ENCODE measurements at regions of chr7 and their contacts with region 1.

Region 1: DNA sequence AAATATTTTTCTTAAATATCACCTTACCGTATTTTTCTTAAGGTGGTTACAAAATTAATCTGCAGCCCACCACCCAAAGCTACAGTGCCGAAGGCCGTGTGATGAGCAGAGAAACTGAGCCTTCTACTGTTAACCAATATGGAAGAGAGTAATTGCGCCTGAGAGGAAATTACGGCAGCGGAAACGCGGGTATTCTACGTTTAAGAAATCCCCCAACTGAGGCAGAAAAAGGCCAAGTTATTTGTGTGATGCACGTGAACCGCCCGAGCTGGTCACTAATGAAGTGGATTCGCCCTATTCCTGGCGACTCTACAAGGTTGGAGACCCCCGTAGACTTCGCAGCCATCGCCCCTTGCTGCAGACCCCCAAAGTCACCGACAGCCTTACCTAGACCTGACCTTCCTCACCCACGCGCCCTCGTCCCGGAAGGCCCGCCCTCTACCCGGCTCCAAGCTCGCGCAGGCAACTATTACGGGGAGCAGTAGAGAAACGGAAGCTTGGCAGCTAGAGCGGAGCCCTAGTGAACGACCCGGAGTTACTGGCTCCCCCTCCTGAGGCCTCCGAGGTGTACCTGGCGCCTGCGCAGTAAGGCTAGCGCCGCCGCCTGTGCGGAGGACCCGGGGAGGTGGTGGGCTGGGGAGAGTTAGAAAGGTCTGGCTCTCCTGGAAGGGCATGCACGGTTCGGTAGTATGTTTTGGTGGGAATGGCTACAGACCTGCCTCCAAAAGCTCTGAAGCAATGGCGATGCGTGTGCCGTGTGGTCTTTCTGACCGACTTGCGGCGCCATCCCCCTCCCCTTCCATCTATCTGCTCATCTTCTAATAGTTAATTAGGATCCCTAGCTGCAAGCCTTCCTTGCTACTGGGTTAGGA is at the start of gene MRPS33:
- DNase-seq: peak; percentile 97
- H3K4me3 Mint-ChIP-seq: peak within 1 kb of the TSS; percentile 98
- H3K27ac Mint-ChIP-seq: peak within 1 kb of the TSS; percentile 100
- H3K4me1 Mint-ChIP-seq: peaks cover 33% of the 10 kb centered on the region
- H3K27me3 Mint-ChIP-seq: peaks cover 5% of the 10 kb centered on the region
- total RNA-seq, gene MRPS33: 95.4 to 95.8 TPM

Region 2: GRCh38 chr7:139753081-139753692 is 1261.6 kb before region 1 on chr7:
- CTCF ChIA-PET with region 1: no interaction called
- POLR2A ChIA-PET with region 1: no interaction called
- intact Hi-C with region 1: no loop called
- DNase-seq: no peak
- H3K4me3 Mint-ChIP-seq: no peak overlapping the region
- H3K27ac Mint-ChIP-seq: no peak overlapping the region
- H3K4me1 Mint-ChIP-seq: peaks cover 35% of the 10 kb centered on the region
- H3K27me3 Mint-ChIP-seq: no peaks in the 10 kb centered on the region

Region 3: DNA sequence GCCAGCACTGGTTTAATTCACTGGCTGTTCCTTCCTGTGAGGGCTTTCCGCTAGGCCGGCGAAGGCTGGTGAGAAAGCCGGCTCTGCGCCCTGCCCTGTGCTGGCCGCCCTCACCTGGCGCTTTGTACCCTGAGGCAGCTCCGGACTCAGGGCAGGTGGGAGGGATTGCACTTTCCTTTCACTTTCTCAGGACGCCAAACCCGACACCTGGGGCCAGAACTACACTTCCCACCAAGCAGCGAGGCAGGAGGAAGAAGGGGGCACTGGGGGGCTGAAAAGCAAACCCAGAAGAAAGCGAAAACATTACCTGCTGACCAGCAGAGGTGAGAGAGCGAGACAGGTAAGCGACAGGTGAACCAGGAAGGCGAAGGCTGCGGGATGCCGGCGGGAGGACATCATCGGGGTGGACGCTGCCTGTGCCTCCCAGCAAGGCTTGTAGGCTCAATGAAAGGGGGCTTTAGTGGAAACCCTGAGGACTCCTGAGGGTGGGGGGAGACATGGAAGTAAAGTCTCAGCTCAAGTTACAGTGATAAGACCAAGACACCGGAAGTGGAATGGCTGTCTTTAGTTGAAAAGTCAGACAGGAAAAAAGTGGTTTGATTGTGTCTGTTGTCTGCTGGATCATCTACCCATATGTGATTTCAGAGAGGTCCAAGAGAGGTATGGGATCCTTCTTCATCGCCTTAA is 610.7 kb before region 1 on chr7 and contains the start of gene RAB19:
- CTCF ChIA-PET with region 1: no interaction called
- POLR2A ChIA-PET with region 1: no interaction called
- intact Hi-C with region 1: loop called (anchors 10 kb)
- DNase-seq: peak; percentile 61
- H3K4me3 Mint-ChIP-seq: peak within 1 kb of the TSS; percentile 87
- H3K27ac Mint-ChIP-seq: peak within 1 kb of the TSS; percentile 92
- H3K4me1 Mint-ChIP-seq: peaks cover 33% of the 10 kb centered on the region
- H3K27me3 Mint-ChIP-seq: no peaks in the 10 kb centered on the region
- total RNA-seq, gene RAB19: 13.3 to 14.5 TPM

Region 4: GRCh38 chr7:140653319-140654108 is 361.2 kb before region 1 on chr7:
- CTCF ChIA-PET with region 1: no interaction called
- POLR2A ChIA-PET with region 1: no interaction called
- intact Hi-C with region 1: loop called (anchors 5 kb)
- DNase-seq: no peak
- H3K4me3 Mint-ChIP-seq: no peak overlapping the region
- H3K27ac Mint-ChIP-seq: no peak overlapping the region
- H3K4me1 Mint-ChIP-seq: peaks cover 17% of the 10 kb centered on the region
- H3K27me3 Mint-ChIP-seq: peaks cover 5% of the 10 kb centered on the region

Region 5: GRCh38 chr7:140726281-140726680 is 288.5 kb before region 1 on chr7:
- CTCF ChIA-PET with region 1: interaction called, 5 read pairs
- POLR2A ChIA-PET with region 1: no interaction called
- intact Hi-C with region 1: loop called (anchors 10 kb)
- DNase-seq: no peak
- H3K4me3 Mint-ChIP-seq: no peak overlapping the region
- H3K27ac Mint-ChIP-seq: no peak overlapping the region
- H3K4me1 Mint-ChIP-seq: peaks cover 15% of the 10 kb centered on the region
- H3K27me3 Mint-ChIP-seq: no peaks in the 10 kb centered on the region

Region 6: DNA sequence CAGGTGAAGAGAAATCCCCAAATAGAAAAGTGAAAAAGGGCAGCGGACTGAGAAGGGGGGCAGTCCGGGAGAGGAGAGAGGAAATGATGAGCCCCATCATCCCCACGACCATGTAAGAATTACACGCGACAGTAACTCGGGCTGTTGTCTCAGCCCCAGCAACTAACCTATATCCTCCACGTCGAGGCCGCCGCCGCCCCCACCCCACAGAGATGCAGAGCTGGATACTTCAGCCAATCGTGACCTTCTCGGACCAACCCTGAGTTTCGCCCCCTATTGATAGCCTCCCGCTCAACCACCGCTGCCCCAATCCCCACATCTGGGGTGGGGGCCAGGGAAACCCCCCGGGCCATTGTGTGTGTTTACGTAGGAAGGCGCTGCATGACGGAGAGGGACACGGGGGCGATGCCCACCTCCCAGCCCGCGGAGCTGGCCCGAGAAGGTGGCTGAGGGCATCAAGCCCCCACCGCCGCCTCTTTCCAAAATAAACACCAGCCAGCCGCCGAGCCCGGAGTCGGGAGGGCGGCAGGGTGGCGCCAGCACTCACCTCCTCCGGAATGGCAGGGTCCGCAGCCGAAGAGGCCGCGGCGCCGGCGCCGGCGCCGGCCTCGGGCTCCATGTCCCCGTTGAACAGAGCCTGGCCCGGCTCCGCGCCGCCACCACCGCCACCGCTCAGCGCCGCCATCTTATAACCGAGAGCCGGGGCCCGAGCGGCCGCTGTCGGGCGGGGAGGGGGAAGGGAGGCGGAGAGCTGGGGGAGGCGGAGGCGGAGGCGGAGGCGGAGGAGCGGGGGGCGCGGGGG is 90.5 kb before region 1 on chr7:
- CTCF ChIA-PET with region 1: interaction called, 4 read pairs
- POLR2A ChIA-PET with region 1: interaction called, 22 read pairs
- intact Hi-C with region 1: loop called (anchors 1 kb)
- DNase-seq: peak; percentile 81
- H3K4me3 Mint-ChIP-seq: no peak overlapping the region
- H3K27ac Mint-ChIP-seq: no peak overlapping the region
- H3K4me1 Mint-ChIP-seq: peaks cover 16% of the 10 kb centered on the region
- H3K27me3 Mint-ChIP-seq: no peaks in the 10 kb centered on the region

Region 7: GRCh38 chr7:140945940-140946339 is 68.8 kb before region 1 on chr7:
- CTCF ChIA-PET with region 1: no interaction called
- POLR2A ChIA-PET with region 1: no interaction called
- intact Hi-C with region 1: no loop called
- DNase-seq: no peak
- H3K4me3 Mint-ChIP-seq: no peak overlapping the region
- H3K27ac Mint-ChIP-seq: no peak overlapping the region
- H3K4me1 Mint-ChIP-seq: no peaks in the 10 kb centered on the region
- H3K27me3 Mint-ChIP-seq: peaks cover 3% of the 10 kb centered on the region

Region 8: GRCh38 chr7:141178486-141179135 is 163.9 kb after region 1 on chr7:
- CTCF ChIA-PET with region 1: no interaction called
- POLR2A ChIA-PET with region 1: no interaction called
- intact Hi-C with region 1: loop called (anchors 5 kb)
- DNase-seq: no peak
- H3K4me3 Mint-ChIP-seq: no peak overlapping the region
- H3K27ac Mint-ChIP-seq: no peak overlapping the region
- H3K4me1 Mint-ChIP-seq: peaks cover 16% of the 10 kb centered on the region
- H3K27me3 Mint-ChIP-seq: peaks cover 4% of the 10 kb centered on the region

Region 9: DNA sequence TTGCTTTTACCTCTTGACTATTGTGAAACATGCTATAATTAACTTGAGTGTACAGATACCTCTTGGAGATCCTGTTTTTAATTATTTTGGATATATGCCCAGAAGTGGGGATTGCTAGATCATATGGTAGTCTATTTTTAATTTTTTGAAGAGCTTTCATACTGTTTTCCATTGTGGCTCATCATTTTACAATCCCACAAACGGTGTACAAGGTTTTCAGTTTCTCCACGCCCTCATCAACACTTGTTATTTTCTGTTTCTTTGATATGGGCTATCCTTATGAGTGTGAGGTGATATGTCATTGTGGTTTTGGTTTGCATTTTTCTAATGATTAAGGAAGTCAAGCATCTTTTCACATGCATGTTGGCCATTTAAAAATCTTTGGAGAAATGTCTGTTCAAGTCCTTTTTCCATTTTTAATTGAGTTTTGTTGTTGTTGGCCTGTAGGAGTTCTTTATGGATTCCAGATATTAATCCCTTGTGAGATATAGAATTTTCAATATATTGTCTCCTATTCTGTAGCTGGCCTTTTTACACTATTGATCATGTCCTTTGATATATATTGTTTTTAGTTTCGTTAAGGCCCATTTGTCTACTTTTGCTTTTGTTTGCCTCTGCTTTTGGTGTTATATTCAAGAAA is 543.9 kb after region 1 on chr7:
- CTCF ChIA-PET with region 1: no interaction called
- POLR2A ChIA-PET with region 1: interaction called, 4 read pairs
- intact Hi-C with region 1: loop called (anchors 2 kb)
- DNase-seq: peak; percentile 17
- H3K4me3 Mint-ChIP-seq: no peak overlapping the region
- H3K27ac Mint-ChIP-seq: peak overlapping the region; percentile 79
- H3K4me1 Mint-ChIP-seq: peaks cover 64% of the 10 kb centered on the region
- H3K27me3 Mint-ChIP-seq: no peaks in the 10 kb centered on the region